HEK293T (cell line): ENCODE measurements at regions of chr17 and their contacts with region 1.

Region 1: GRCh38 chr17:16215273-16215964 is at the start of gene NCOR1:
- DNase-seq: peak; percentile 79

Region 2: DNA sequence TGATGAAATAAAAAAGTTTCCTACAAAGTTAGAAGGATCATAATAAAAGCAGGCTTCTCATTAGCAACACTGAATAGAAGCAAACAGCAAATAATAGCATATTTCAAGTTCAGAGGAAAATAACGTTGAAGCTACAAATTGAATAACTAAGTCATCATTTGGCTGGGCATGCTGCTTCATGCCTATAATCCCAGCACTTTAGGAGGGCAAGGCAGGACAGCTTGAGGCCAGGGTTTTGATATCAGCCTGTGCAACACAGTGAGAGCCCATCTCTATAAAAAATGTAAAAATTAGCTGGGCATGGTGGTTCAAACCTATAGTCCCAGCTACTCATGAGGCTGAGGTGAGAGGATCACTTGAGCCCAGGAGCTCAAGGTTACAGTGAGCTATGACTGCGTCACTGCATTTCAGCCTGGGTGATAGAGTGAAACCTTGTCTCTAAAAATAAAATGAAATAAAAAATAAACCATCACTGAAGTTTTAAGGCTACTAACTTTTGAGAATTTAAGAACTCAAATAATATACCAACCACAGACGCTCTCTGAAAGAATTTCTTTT is 25.5 kb before region 1 on chr17:
- CTCF ChIA-PET with region 1: interaction called, 5 read pairs
- POLR2A ChIA-PET with region 1: interaction called, 20 read pairs
- DNase-seq: no peak

Region 3: GRCh38 chr17:16232391-16232790 is 17.0 kb after region 1 on chr17:
- CTCF ChIA-PET with region 1: interaction called, 3 read pairs
- POLR2A ChIA-PET with region 1: interaction called, 86 read pairs
- DNase-seq: no peak

Region 4: GRCh38 chr17:16297367-16298139 is 82.1 kb after region 1 on chr17:
- CTCF ChIA-PET with region 1: no interaction called
- POLR2A ChIA-PET with region 1: interaction called, 26 read pairs
- DNase-seq: no peak

Region 5: DNA sequence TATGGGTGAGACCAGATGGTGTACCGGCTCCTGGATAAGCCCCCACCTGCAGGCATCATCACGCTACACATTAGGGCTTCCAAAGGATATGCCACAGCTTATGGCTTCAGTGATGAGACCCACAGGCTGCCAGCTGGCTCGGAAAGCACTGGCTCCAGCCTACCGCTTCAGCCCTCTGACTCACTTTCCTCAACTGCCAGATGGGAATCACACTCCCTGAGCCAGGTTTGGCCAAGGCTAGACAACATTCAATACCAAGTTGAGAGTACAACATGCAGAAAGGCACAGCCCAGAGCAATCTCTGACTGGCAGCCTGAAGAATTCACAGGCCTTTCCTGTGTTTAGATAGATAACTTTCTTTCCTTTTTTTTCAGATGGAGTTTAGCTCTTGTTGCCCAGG is 127.6 kb after region 1 on chr17:
- CTCF ChIA-PET with region 1: no interaction called
- POLR2A ChIA-PET with region 1: no interaction called
- DNase-seq: no peak

Region 6: GRCh38 chr17:16380640-16381495 is 165.4 kb after region 1 on chr17 and contains the start of gene UBB:
- CTCF ChIA-PET with region 1: no interaction called
- POLR2A ChIA-PET with region 1: interaction called, 11 read pairs
- DNase-seq: peak; percentile 89